Activated CD4-positive, alpha-beta memory T cell treated with anti-CD3 and anti-CD28 coated beads, Interleukin-2, amount 10 ng/mL, durations not matched to agents 7 days and 5 days (primary cell): ENCODE measurements at regions of chr6 and their contacts with region 1.

Region 1: GRCh38 chr6:70717038-70717801 is 49.5 kb downstream of the SMAP1 start:
- DNase-seq: no peak
- H3K4me3 Mint-ChIP-seq: no peak overlapping the region
- H3K27ac Mint-ChIP-seq: peak overlapping the region; percentile 76
- H3K4me1 Mint-ChIP-seq: peaks cover 42% of the 10 kb centered on the region
- H3K27me3 Mint-ChIP-seq: no peaks in the 10 kb centered on the region

Region 2: DNA sequence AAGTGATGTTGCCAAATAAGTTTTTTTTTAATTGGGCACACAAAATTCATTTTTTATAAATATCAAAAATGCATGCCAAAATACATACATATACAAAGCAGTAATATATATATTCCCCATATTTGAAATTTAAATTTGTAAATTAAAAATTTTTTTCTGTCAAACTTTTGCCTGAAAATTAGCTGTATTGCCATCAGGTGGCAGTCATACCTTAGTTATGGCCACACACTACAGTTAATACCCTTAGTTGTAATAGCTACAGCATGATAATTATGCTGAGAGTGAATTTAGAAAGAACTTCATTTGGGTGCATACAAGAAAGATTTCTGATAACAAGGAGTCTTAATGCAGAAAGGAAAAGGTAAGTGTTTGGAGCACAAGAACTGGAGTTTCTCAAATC is 196.6 kb before region 1 on chr6:
- CTCF ChIA-PET with region 1: no interaction called
- POLR2A ChIA-PET with region 1: no interaction called
- DNase-seq: no peak
- H3K4me3 Mint-ChIP-seq: no peak overlapping the region
- H3K27ac Mint-ChIP-seq: no peak overlapping the region
- H3K4me1 Mint-ChIP-seq: peaks cover 4% of the 10 kb centered on the region
- H3K27me3 Mint-ChIP-seq: no peaks in the 10 kb centered on the region

Region 3: GRCh38 chr6:70706491-70707123 is 10.6 kb before region 1 on chr6:
- CTCF ChIA-PET with region 1: interaction called, 14 read pairs
- POLR2A ChIA-PET with region 1: interaction called, 8 read pairs
- DNase-seq: no peak
- H3K4me3 Mint-ChIP-seq: no peak overlapping the region
- H3K27ac Mint-ChIP-seq: no peak overlapping the region
- H3K4me1 Mint-ChIP-seq: peaks cover 23% of the 10 kb centered on the region
- H3K27me3 Mint-ChIP-seq: no peaks in the 10 kb centered on the region